ENCODE measurements at regions of chr5 and their contacts with region 1.

Region 1: DNA sequence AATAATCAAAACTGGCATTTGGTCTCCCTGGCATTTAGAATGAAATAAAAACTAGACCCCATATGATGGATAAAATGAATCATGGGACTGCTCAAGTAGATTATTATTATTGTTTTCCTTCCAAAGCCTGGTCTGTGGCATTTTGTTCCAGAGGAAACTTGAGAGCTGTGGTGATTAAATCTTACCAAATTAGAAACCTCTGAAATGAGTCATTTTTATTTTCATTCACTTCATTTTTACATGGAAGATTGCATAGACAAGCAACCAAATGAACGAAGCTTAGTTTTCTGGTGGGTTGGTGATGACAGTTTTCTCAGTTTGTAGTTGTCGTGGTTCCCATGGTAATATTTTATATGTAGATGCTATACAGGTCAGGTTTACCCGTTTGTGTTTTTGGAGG is 23.4 kb downstream of the PAM start:
- H3K4me3 Mint-ChIP-seq: no peak overlapping the region
- H3K27ac Mint-ChIP-seq: no peak overlapping the region
- H3K4me1 Mint-ChIP-seq: peaks cover 15% of the 10 kb centered on the region
- H3K27me3 Mint-ChIP-seq: no peaks in the 10 kb centered on the region

Region 2: GRCh38 chr5:102971697-102972293 is 193.3 kb after region 1 on chr5:
- intact Hi-C with region 1: loop called (anchors 1 kb)
- H3K4me3 Mint-ChIP-seq: no peak overlapping the region
- H3K27ac Mint-ChIP-seq: no peak overlapping the region
- H3K4me1 Mint-ChIP-seq: peaks cover 8% of the 10 kb centered on the region
- H3K27me3 Mint-ChIP-seq: no peaks in the 10 kb centered on the region

Region 3: GRCh38 chr5:103041071-103041676 is 262.7 kb after region 1 on chr5:
- intact Hi-C with region 1: loop called (anchors 5 kb)
- H3K4me3 Mint-ChIP-seq: no peak overlapping the region
- H3K27ac Mint-ChIP-seq: no peak overlapping the region
- H3K4me1 Mint-ChIP-seq: no peaks in the 10 kb centered on the region
- H3K27me3 Mint-ChIP-seq: no peaks in the 10 kb centered on the region

Region 4: DNA sequence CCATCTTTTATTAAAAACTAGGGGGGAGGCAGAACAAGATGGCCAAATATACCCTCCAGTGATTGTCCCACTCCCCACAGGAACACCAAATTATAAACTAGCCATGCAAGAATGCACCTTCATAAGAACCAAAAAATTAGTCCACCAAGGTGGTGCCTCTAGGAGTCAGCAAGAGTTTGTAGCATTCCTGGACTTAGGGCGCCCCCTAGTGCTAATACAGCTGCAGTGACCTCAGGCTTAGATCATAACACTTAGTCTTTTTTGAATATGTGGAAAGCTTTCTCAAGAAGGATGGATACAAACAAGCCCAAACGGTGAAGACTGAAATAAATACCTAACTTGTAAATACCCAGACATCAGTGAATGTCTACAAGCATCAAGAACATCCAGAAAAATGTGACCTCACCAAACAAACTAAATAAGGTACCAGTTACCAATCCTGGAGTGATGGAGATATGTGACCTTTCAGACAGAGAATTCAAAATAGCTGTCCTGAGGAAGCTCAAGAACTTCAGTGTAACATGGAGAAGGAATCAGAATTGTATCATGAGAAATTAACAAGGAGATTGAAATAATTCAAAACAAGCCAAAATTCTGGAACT is 360.9 kb after region 1 on chr5:
- intact Hi-C with region 1: loop called (anchors 2 kb)
- H3K4me3 Mint-ChIP-seq: no peak overlapping the region
- H3K27ac Mint-ChIP-seq: no peak overlapping the region
- H3K4me1 Mint-ChIP-seq: peaks cover 3% of the 10 kb centered on the region
- H3K27me3 Mint-ChIP-seq: no peaks in the 10 kb centered on the region

Region 5: DNA sequence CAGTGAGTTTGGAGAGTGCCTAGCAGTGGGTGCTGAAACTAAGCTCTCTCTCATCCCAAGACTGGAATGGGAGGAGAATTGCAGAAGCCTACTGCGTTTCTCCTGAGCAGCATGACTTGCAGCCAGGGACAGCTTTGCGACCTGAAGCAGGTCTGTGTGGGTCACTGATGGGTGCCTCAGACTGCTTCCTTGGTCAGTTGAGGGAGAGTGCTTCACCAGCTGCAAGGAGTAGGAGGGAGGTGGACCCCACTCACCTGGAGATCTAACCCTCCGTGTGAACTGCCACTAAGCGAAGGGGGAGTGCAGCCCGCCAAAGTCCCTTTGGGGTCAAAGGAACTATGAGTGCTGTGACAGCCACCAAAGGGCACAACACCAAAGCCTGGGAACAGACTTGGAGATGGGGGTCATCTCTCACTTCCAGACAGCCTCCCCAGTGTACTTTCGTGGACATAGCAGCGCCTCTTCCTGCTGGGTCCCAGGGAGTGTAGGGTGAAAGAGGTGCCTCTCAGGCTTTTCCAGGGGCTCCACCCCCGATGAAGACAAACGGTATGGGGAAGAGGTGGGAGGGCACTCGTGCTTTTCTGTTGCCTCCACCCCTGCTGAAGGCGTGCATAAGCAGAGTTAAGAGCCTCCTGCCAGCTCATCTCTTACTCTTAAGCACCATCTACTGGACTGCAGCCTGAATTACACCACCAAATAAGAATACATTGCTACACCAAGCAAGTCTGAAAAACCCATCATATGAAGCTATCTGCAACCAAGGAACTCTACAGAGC is 445.8 kb after region 1 on chr5:
- intact Hi-C with region 1: loop called (anchors 2 kb)
- H3K4me3 Mint-ChIP-seq: peak overlapping the region; percentile 53
- H3K27ac Mint-ChIP-seq: no peak overlapping the region
- H3K4me1 Mint-ChIP-seq: peaks cover 14% of the 10 kb centered on the region
- H3K27me3 Mint-ChIP-seq: no peaks in the 10 kb centered on the region

Measured in dendritic cell treated with granulocyte-macrophage colony-stimulating factor and Interleukin-4, amounts not matched to agents 40 ng/mL and 50 ng/mL, for 4 days (primary cell).